Activated B cell treated with CpG ODN at 0.5 μM for 24 hours (primary cell): ENCODE measurements at regions of chr10 and their contacts with region 1.

Region 1: DNA sequence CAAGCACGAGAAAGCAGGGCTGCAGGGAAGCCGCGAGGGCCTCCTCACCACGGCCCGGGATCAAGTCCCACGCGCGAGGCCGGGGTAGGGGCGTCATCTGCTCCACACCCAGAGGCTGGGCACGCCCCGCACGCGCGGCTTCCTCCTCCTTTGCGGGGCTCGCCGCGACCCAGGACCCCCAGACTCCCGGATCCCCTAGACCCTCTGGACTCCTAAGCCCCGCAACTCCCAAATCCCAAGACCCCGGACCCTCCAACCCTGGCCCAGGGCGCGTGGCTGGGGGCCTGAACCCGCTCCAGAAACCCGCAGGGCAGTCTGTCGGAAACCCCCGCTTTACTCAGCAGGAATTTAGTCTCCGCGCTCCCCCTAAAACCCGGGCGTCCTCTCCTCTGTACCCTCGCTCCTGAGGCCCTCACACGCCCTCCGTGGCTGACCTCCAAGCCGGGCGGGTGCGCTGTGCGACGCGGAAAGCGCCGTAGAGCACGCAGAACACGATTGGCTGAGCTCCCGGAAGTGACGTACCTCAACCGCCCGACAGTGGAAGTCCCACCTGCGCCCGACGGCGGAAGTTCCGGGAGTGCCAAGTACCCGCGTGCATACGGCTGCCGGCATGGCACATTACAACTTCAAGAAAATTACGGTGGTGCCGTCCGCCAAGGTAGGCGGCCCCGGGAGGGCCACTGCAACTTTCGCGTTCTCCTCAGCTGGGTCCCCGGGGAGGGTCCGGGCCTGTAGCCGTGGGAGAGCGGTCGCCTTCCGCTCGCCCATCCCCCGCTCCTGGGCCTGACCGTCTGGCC is at the start of gene GTPBP4:
- DNase-seq: peak; percentile 88
- ATAC-seq: peak; percentile 97
- H3K4me3 Mint-ChIP-seq: peak within 1 kb of the TSS; percentile 92
- H3K27ac Mint-ChIP-seq: peak within 1 kb of the TSS; percentile 92
- H3K4me1 Mint-ChIP-seq: peaks cover 49% of the 10 kb centered on the region
- H3K27me3 Mint-ChIP-seq: no peaks in the 10 kb centered on the region
- CTCF ChIP-seq: no peak
- total RNA-seq, gene GTPBP4: 68.0 and 73.8 TPM in 2 replicates

Region 2: DNA sequence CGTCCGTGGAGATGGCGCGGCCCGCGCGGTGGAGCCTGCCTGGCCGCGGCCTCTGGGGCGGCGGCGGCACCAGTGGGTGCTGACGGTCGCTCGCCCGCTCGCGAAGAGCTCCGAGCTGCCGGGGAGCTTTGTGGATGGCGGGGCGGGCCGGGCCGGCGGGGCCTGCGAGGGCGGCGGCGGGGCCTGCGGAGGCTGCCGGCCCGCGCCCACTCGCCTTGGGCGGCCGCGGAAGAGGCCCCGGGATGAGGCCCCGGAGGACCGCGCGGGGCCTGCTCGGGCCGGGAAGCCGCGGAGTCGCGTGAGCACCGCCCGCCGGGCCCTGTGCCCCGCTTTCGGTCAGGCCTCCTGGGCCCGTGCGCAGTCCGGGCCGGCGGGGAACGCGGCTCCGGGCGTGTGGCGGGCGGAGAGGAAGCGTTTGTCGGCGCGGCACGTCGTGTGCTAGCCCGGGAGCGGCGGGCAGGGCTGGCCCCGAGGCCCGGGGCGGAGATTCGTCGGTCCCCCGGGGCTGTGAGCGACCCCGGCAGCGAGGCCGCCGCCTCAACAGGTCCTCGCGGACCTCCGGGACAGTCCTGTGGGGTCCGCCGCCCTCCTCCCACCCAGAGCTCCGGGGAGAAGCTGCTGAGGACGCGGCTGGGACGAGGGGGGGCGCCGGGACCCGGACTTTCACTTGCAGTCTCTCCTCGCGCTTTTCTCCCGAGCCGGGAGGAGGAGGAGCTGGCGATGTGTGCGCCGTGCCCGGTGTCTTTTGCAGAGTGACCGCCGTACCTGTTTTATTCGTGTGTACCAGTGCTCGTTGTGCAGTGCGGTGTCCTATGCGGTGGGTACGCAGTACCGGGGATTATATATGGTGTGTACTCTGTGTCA is 852.2 kb before region 1 on chr10:
- CTCF ChIA-PET with region 1: no interaction called
- POLR2A ChIA-PET with region 1: no interaction called
- intact Hi-C with region 1: loop called (anchors 5 kb)
- DNase-seq: peak; percentile 73
- ATAC-seq: peak; percentile 51
- H3K4me3 Mint-ChIP-seq: peak overlapping the region; percentile 77
- H3K27ac Mint-ChIP-seq: peak overlapping the region; percentile 60
- H3K4me1 Mint-ChIP-seq: peaks cover 28% of the 10 kb centered on the region
- H3K27me3 Mint-ChIP-seq: peaks cover 4% of the 10 kb centered on the region
- CTCF ChIP-seq: no peak

Region 3: GRCh38 chr10:511101-511848 is 476.8 kb before region 1 on chr10:
- CTCF ChIA-PET with region 1: no interaction called
- POLR2A ChIA-PET with region 1: no interaction called
- intact Hi-C with region 1: loop called (anchors 5 kb)
- DNase-seq: peak; percentile 71
- ATAC-seq: peak; percentile 75
- H3K4me3 Mint-ChIP-seq: no peak overlapping the region
- H3K27ac Mint-ChIP-seq: no peak overlapping the region
- H3K4me1 Mint-ChIP-seq: peaks cover 13% of the 10 kb centered on the region
- H3K27me3 Mint-ChIP-seq: peaks cover 20% of the 10 kb centered on the region
- CTCF ChIP-seq: peak; percentile 93

Region 4: DNA sequence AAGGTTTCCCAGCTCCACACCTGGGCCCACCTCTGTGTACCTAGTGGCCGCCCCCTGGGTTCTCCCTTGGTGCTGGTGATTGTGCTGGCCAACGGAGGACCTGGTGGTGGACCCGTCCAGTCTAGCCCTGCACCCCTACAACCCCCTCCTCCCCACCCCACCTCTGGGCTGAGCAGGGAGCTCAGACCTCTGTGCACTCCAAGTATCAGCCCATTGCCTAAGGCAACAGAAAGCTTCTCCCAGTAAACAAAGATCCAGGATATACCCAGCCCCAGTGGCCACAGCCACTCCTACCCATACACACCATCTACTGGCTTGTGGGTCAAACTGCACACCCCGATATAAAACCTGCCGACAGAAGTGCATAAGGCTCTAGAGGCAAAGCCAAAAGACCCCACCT is 193.6 kb before region 1 on chr10:
- CTCF ChIA-PET with region 1: no interaction called
- POLR2A ChIA-PET with region 1: no interaction called
- intact Hi-C with region 1: no loop called
- DNase-seq: no peak
- ATAC-seq: no peak
- H3K4me3 Mint-ChIP-seq: no peak overlapping the region
- H3K27ac Mint-ChIP-seq: no peak overlapping the region
- H3K4me1 Mint-ChIP-seq: peaks cover under 1% of the 10 kb centered on the region
- H3K27me3 Mint-ChIP-seq: no peaks in the 10 kb centered on the region
- CTCF ChIP-seq: no peak

Region 5: GRCh38 chr10:851901-852300 is 136.2 kb before region 1 on chr10:
- CTCF ChIA-PET with region 1: no interaction called
- POLR2A ChIA-PET with region 1: no interaction called
- intact Hi-C with region 1: loop called (anchors 1 kb)
- DNase-seq: peak; percentile 18
- ATAC-seq: peak; percentile 88
- H3K4me3 Mint-ChIP-seq: peak overlapping the region; percentile 62
- H3K27ac Mint-ChIP-seq: peak overlapping the region; percentile 73
- H3K4me1 Mint-ChIP-seq: peaks cover 70% of the 10 kb centered on the region
- H3K27me3 Mint-ChIP-seq: no peaks in the 10 kb centered on the region
- CTCF ChIP-seq: no peak

Region 6: DNA sequence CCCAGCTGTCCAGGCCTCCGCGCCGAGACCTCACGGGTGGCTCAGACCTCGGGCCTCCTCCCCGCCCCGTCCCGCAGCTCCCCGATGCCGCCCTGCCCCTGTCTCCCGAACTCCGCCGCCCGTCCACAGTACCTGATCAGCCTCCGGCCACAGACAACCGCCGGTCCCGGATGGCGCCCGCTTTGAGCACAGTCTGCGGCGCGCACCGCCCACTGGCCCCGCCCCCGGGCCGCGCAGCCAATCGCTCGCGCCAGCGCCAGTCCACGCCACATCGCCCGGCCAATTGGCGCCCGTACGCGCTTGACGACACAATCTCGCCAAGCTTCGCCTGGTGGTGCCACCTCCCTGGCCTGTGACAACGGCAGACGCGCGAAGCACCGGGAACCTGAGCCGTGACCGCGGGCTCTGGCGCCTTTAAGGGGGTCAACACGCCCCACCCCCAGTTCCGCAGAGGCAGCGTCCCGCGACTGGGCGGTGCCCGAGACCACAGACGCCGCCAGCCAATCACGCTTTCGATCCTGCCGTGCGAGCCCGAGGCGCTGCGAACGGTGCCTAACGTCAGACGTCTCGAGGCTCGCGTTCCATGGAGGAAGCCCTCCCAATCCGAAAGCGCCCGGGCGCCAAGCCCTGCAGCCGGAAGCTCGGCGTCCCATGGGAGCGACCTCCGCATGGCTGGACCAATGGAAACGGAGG is 60.8 kb after region 1 on chr10 and contains the start of gene IDI1:
- CTCF ChIA-PET with region 1: no interaction called
- POLR2A ChIA-PET with region 1: interaction called, 14 read pairs
- intact Hi-C with region 1: loop called (anchors 1 kb)
- DNase-seq: peak; percentile 96
- ATAC-seq: peak; percentile 77
- H3K4me3 Mint-ChIP-seq: peak within 1 kb of the TSS; percentile 94
- H3K27ac Mint-ChIP-seq: peak within 1 kb of the TSS; percentile 98
- H3K4me1 Mint-ChIP-seq: peaks cover 71% of the 10 kb centered on the region
- H3K27me3 Mint-ChIP-seq: no peaks in the 10 kb centered on the region
- CTCF ChIP-seq: no peak
- total RNA-seq, gene IDI1: 75.8 and 79.8 TPM in 2 replicates

Region 7: DNA sequence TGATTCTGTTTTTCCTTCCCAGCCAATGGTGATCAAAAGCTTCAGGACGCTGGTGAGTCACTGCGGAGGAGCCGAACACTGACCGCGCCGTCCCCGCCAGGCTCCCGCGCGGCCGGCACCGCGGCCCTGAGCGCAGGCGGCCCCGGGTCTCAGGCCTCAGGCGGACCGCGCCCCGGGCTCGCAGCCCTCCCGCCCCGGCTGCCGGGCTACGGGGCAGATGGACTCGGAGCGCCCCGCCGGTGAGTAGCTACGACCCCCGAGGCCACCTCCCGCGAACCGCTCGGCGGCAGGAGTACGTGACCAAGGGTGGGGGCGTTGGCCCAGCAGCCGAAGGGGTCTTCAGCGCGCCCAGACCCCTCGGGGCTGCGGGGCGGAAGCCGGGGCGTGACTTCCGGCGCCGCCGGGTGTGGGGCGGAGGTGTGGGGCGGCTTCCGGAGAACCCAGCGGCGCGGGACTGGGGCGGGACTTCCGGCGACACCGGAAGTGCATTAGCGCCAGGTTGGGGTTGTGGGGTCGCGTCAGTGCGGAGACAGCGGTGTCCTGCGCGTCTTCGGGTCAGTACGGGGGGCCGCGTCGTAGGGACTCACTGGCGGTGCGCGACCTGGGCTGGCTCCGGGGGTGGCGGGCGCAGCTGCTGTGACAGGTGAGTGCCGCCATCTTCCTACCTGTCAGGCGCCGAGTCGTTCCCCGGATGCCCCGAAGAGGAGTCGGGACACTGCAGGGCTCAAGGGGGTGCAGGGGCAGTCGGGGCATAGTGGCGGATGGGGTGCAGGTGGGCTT is 68.4 kb after region 1 on chr10 and contains the start of gene WDR37:
- CTCF ChIA-PET with region 1: no interaction called
- POLR2A ChIA-PET with region 1: interaction called, 16 read pairs
- intact Hi-C with region 1: loop called (anchors 1 kb)
- DNase-seq: peak; percentile 94
- ATAC-seq: peak; percentile 89
- H3K4me3 Mint-ChIP-seq: peak within 1 kb of the TSS; percentile 94
- H3K27ac Mint-ChIP-seq: peak within 1 kb of the TSS; percentile 92
- H3K4me1 Mint-ChIP-seq: peaks cover 74% of the 10 kb centered on the region
- H3K27me3 Mint-ChIP-seq: no peaks in the 10 kb centered on the region
- CTCF ChIP-seq: no peak
- total RNA-seq, gene WDR37: 16.2 and 20.0 TPM in 2 replicates